ENCODE measurements at regions of chr18 and their contacts with region 1.

Region 1: DNA sequence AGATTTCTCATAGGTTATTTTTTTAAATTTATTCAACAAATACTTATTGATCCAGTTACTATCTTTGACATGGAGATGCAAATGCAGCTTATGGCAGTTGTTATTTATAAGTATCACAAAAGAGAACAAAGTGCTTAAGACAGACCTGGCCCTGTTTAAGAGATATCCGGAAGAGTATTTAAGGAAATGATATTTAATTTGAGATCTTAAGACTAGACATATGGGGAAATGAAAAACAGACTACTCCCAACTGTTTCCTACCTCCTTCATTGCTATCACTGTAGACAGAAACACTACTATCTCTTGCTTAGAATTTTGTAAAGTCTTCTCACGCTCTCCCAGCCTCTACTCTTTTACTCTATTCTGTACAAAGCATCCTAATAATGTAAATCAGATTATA is 36.0 kb downstream of the RPRD1A start:
- DNase-seq: no peak
- H3K4me3 ChIP-seq: no peak overlapping the region
- H3K27ac ChIP-seq: no peak overlapping the region
- H3K4me1 ChIP-seq: peaks cover 0 to 6% (median 2%) of the 10 kb centered on the region in 4 experiments
- H3K27me3 ChIP-seq: no peaks in the 10 kb centered on the region

Region 2: GRCh38 chr18:35851286-35851970 is 180.0 kb before region 1 on chr18:
- CTCF ChIA-PET with region 1: no interaction called
- POLR2A ChIA-PET with region 1: no interaction called
- DNase-seq: no peak
- H3K4me3 ChIP-seq: no peak overlapping the region
- H3K27ac ChIP-seq: no peak overlapping the region
- H3K4me1 ChIP-seq: no peaks in the 10 kb centered on the region
- H3K27me3 ChIP-seq: no peaks in the 10 kb centered on the region

Region 3: GRCh38 chr18:36015629-36016028 is 15.8 kb before region 1 on chr18:
- CTCF ChIA-PET with region 1: interaction called, 12 read pairs
- POLR2A ChIA-PET with region 1: no interaction called
- DNase-seq: no peak
- H3K4me3 ChIP-seq: no peak overlapping the region
- H3K27ac ChIP-seq: no peak overlapping the region
- H3K4me1 ChIP-seq: no peaks in the 10 kb centered on the region
- H3K27me3 ChIP-seq: no peaks in the 10 kb centered on the region

Measured in common myeloid progenitor, CD34-positive (primary cell).